Activated CD4-positive, alpha-beta memory T cell treated with anti-CD3 and anti-CD28 coated beads for 36 hours (primary cell): ENCODE measurements at regions of chr6 and their contacts with region 1.

Region 1: GRCh38 chr6:157879873-157880254 is 56.8 kb downstream of the SNX9 start:
- DNase-seq: no peak
- H3K4me3 Mint-ChIP-seq: no peak overlapping the region
- H3K27ac Mint-ChIP-seq: peak overlapping the region; percentile 42
- H3K4me1 Mint-ChIP-seq: peaks cover 72% of the 10 kb centered on the region
- H3K27me3 Mint-ChIP-seq: no peaks in the 10 kb centered on the region

Region 2: GRCh38 chr6:158072083-158072721 is 192.3 kb after region 1 on chr6:
- CTCF ChIA-PET with region 1: interaction called, 3 read pairs
- POLR2A ChIA-PET with region 1: no interaction called
- intact Hi-C with region 1: loop called (anchors 1 kb)
- DNase-seq: peak; percentile 80
- H3K4me3 Mint-ChIP-seq: no peak overlapping the region
- H3K27ac Mint-ChIP-seq: peak overlapping the region; percentile 64
- H3K4me1 Mint-ChIP-seq: peaks cover 23% of the 10 kb centered on the region
- H3K27me3 Mint-ChIP-seq: no peaks in the 10 kb centered on the region